SK-N-SH (cell line): ENCODE measurements at regions of chr1 and their contacts with region 1.

Region 1: GRCh38 chr1:202599677-202600431 is 110.4 kb downstream of the SYT2 start:
- DNase-seq: peak; percentile 80
- H3K4me3 ChIP-seq: no peak overlapping the region
- H3K27ac ChIP-seq: peak overlapping the region; percentile 24 to 48; a peak in 2 of 4 replicates
- H3K4me1 ChIP-seq: peaks cover 0 to 7% of the 10 kb centered on the region in 2 experiments; a peak in 1 of 4 replicates
- H3K27me3 ChIP-seq: no peaks in the 10 kb centered on the region
- CTCF ChIP-seq: peak; percentile 90
- EP300 ChIP-seq: no peak
- RAD21 ChIP-seq: peak; percentile 96

Region 2: GRCh38 chr1:202462342-202463076 is 137.3 kb before region 1 on chr1:
- CTCF ChIA-PET with region 1: interaction called, 23 read pairs
- POLR2A ChIA-PET with region 1: no interaction called
- DNase-seq: no peak
- H3K4me3 ChIP-seq: no peak overlapping the region
- H3K27ac ChIP-seq: no peak overlapping the region
- H3K4me1 ChIP-seq: peaks cover 0 to 14% of the 10 kb centered on the region in 2 experiments; a peak in 3 of 4 replicates
- H3K27me3 ChIP-seq: no peaks in the 10 kb centered on the region
- CTCF ChIP-seq: no peak
- EP300 ChIP-seq: no peak
- RAD21 ChIP-seq: no peak

Region 3: DNA sequence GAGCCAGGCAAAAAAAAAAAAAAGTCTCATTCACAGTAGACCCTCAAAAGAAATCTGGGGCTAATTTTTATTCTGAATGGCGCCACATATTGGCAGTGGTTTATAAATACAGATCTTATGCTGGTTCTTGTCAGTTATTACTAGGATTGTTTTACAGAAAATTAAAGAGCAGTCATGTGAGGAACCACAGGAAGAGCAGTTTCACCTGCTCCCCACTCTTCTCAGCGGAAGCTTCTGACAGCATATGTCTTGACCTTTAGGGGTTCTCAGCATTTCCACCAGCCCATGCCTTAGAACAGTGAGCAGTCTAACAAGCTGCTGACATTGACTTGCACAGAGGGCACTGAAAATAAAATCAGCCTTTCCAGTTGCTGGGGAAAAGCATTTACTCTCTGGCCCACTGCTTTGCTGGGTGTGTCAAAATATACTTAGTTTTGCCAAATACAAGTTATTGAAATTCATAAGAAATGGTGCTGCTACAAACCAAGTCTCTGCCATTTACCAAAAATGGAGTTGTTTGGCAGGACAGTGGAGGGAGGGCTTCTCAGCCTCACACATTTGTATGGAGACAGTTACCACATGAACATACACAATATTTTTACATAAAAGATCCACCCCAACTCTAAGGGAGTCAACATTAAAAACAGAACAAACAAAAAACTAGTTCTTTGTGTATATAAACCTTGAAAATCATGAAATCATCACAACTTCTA is 33.8 kb before region 1 on chr1:
- CTCF ChIA-PET with region 1: interaction called, 19 read pairs
- POLR2A ChIA-PET with region 1: no interaction called
- DNase-seq: no peak
- H3K4me3 ChIP-seq: no peak overlapping the region
- H3K27ac ChIP-seq: peak overlapping the region; percentile 75 to 92; a peak in 2 of 4 replicates
- H3K4me1 ChIP-seq: peaks cover 39 to 45% of the 10 kb centered on the region in 2 experiments
- H3K27me3 ChIP-seq: no peaks in the 10 kb centered on the region
- CTCF ChIP-seq: no peak
- EP300 ChIP-seq: no peak
- RAD21 ChIP-seq: no peak

Region 4: DNA sequence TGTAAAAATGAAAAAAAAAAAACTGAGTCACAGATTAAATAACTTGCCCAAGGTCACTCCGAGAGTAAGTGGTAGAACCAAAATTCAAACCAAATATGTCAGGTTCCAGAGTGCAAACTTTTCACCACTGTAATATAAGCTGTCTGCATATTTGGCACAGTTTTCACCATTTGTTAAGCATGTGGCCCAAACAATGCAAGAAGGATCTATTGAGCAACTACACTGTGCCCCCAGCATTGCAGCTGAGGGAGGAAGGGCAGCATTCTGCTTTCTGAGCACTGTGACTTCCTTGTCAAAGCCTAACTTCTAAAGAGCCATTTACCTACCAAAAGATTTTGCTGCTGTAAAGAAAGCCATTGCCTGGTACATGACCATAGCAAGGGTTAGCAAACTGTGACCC is 23.0 kb before region 1 on chr1:
- CTCF ChIA-PET with region 1: interaction called, 48 read pairs
- POLR2A ChIA-PET with region 1: no interaction called
- DNase-seq: no peak
- H3K4me3 ChIP-seq: no peak overlapping the region
- H3K27ac ChIP-seq: peak overlapping the region; percentile 72 to 96
- H3K4me1 ChIP-seq: peaks cover 52 to 77% of the 10 kb centered on the region in 2 experiments
- H3K27me3 ChIP-seq: no peaks in the 10 kb centered on the region
- CTCF ChIP-seq: no peak
- EP300 ChIP-seq: no peak
- RAD21 ChIP-seq: no peak

Region 5: GRCh38 chr1:202615501-202616354 is 15.9 kb after region 1 on chr1:
- CTCF ChIA-PET with region 1: interaction called, 19 read pairs
- POLR2A ChIA-PET with region 1: no interaction called
- DNase-seq: peak; percentile 34
- H3K4me3 ChIP-seq: no peak overlapping the region
- H3K27ac ChIP-seq: peak overlapping the region; percentile 30 to 58
- H3K4me1 ChIP-seq: peaks cover 23 to 29% of the 10 kb centered on the region in 2 experiments; a peak in 3 of 4 replicates
- H3K27me3 ChIP-seq: no peaks in the 10 kb centered on the region
- CTCF ChIP-seq: 0 out of 2 replicates have a peak, but pooled peaks have one; percentile 17
- EP300 ChIP-seq: no peak; a peak in 1 of 4 replicates
- RAD21 ChIP-seq: no peak